ENCODE measurements at regions of chr6 and their contacts with region 1.

Region 1: GRCh38 chr6:7389451-7390225 is at the starts of genes CAGE1 and RIOK1:
- DNase-seq: peak; percentile 93
- H3K4me3 Mint-ChIP-seq: peak within 1 kb of the TSS; percentile 92
- H3K27ac Mint-ChIP-seq: peak within 1 kb of the TSS; percentile 100
- H3K4me1 Mint-ChIP-seq: peaks cover 53% of the 10 kb centered on the region
- H3K27me3 Mint-ChIP-seq: no peaks in the 10 kb centered on the region
- total RNA-seq, gene CAGE1: 0.13 and 0.20 TPM in 2 replicates
- total RNA-seq, gene RIOK1: 61.4 and 67.2 TPM in 2 replicates

Region 2: DNA sequence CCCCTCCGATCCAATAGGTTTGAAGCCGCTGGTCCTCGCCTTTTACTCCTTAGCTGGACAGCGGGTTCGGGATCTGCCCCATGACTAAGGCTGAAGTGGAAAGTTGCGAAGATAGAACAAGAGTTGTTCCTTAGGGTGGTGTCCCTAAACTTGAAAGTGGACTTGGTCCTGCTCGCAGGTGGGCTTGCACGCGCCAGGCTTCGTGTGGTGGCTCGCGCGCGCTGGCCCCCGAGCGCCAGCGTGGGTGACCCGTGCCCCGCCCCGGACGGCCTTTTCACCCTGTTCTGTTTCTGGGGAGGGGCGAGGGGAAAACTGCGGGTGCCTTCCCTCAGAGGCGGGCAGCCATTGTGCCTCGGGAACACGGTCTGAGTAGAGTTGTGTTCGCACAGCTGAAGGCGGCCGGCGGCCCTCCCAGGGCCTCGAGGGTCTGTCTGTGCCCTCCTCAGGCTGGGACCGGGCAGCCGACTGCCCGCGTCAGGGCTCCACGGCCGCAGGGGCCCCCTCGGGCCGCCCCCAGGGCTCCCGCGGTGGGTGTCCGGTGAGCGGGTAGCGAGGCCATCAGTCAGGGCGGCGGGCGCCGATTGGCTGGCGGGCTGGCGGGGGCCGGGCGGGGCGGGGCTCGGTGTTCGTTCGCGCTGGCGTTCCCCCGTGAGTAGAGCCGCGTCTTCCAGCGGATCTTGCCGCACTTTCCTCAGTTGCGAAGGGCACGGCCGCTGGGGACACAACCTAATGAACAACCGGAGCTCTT is 248.8 kb before region 1 on chr6:
- intact Hi-C with region 1: loop called (anchors 2 kb)
- DNase-seq: peak; percentile 78
- H3K4me3 Mint-ChIP-seq: peak overlapping the region; percentile 84
- H3K27ac Mint-ChIP-seq: peak overlapping the region; percentile 84
- H3K4me1 Mint-ChIP-seq: peaks cover 68% of the 10 kb centered on the region
- H3K27me3 Mint-ChIP-seq: no peaks in the 10 kb centered on the region

Region 3: DNA sequence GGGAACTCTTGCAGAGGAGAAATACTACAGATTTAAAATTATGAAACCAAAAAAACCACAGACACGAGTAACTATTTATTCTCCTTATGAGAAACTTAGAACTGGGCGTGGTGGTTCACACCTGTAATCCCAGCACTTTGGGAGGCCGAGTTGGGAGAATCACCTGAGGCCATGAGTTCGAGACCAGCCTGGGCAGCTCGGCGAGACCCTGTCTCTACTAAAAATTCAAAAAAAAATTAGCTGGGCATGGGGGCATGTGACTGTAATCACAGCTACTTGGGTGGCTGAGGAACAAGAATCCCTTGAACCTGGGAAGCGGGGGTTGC is 113.5 kb before region 1 on chr6:
- intact Hi-C with region 1: loop called (anchors 1 kb)
- DNase-seq: no peak
- H3K4me3 Mint-ChIP-seq: no peak overlapping the region
- H3K27ac Mint-ChIP-seq: no peak overlapping the region
- H3K4me1 Mint-ChIP-seq: peaks cover 2% of the 10 kb centered on the region
- H3K27me3 Mint-ChIP-seq: no peaks in the 10 kb centered on the region

Region 4: DNA sequence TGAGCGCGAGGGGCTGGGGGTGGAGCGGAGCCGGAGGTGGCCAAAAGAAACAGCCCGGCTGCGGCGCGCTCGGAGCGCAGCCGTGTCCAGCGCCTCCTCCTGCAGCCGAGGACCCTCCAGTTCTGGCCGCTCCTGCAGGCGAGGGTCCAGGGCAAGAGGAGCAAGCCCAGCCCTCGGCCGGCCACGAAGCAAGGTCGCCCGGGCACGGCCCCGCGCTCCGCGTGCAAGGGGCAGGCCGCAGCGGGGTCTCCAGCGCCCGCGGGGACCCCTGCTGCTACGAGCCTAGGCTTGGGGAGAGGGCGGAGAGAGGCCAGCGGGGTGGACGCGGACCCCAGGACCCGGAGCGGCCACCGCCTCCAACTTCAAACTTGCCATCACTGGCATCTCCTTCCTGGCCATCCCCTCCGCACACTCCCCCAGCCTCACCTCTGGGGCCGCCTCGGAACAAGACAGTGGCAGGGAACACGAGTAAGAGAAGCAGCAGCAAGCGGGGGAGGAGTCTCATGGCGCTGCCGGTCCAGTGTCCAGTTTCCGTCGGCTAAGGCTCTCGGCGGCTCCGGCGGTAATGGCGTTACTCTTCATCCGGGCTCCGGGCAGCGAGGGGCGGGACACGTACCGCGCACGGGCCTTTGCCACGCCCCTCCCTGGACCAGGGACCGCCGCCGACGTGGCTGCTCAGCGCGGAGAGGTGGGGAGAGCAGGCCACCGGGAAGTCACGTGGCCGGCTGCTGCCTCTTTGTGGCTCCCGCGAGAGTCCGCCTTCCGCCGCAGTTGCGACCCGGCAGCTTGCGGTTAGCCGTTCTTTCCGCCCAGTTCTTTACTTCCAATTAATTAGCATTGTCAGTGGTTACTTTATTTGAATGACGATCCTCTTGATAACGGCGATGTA is 76.8 kb before region 1 on chr6 and contains the start of gene SSR1:
- intact Hi-C with region 1: loop called (anchors 1 kb)
- DNase-seq: peak; percentile 95
- H3K4me3 Mint-ChIP-seq: peak within 1 kb of the TSS; percentile 98
- H3K27ac Mint-ChIP-seq: peak within 1 kb of the TSS; percentile 94
- H3K4me1 Mint-ChIP-seq: peaks cover 35% of the 10 kb centered on the region
- H3K27me3 Mint-ChIP-seq: no peaks in the 10 kb centered on the region
- total RNA-seq, gene SSR1: 160 and 168 TPM in 2 replicates

Region 5: DNA sequence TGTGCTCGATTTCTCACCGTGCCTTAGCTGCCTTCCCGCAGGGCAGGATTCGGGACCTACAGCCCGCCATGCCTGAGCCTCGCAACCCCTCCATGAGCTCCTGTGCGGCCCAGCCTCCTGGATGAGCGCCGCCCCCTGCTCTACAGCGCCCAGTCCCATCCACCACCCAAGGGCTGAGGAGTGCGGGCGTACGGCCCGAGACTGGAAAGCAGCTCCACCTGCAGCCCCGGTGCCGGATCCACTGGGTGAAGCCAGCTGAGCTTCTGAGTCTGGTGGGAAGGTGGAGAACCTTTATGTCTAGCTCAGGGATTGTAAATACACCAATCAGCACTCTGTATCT is 45.3 kb before region 1 on chr6:
- intact Hi-C with region 1: no loop called
- DNase-seq: no peak
- H3K4me3 Mint-ChIP-seq: no peak overlapping the region
- H3K27ac Mint-ChIP-seq: no peak overlapping the region
- H3K4me1 Mint-ChIP-seq: peaks cover 6% of the 10 kb centered on the region
- H3K27me3 Mint-ChIP-seq: peaks cover 21% of the 10 kb centered on the region

Region 6: GRCh38 chr6:7367408-7367807 is 22.2 kb before region 1 on chr6:
- intact Hi-C with region 1: no loop called
- DNase-seq: no peak
- H3K4me3 Mint-ChIP-seq: no peak overlapping the region
- H3K27ac Mint-ChIP-seq: no peak overlapping the region
- H3K4me1 Mint-ChIP-seq: no peaks in the 10 kb centered on the region
- H3K27me3 Mint-ChIP-seq: peaks cover 14% of the 10 kb centered on the region

Region 7: DNA sequence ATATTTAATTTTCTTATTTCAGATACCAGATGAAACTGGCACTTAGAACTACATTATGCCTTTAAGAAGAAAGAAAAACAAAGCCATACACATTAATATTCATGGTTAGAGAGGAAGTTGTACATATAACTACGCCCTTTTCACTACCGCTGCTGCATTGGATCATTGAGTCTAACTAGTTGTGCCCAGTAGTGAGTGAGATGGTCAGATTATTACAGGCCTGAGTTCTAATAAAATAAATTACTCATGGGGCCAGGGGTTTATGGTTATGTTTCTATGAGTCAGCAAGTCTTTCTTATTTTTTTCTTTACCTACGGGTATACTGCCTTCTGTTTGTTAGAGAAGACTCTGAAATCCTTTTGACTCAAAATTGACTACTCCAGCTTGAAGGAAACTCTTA is 11.4 kb after region 1 on chr6:
- intact Hi-C with region 1: loop called (anchors 1 kb)
- DNase-seq: no peak
- H3K4me3 Mint-ChIP-seq: no peak overlapping the region
- H3K27ac Mint-ChIP-seq: no peak overlapping the region
- H3K4me1 Mint-ChIP-seq: no peaks in the 10 kb centered on the region
- H3K27me3 Mint-ChIP-seq: no peaks in the 10 kb centered on the region

Region 8: DNA sequence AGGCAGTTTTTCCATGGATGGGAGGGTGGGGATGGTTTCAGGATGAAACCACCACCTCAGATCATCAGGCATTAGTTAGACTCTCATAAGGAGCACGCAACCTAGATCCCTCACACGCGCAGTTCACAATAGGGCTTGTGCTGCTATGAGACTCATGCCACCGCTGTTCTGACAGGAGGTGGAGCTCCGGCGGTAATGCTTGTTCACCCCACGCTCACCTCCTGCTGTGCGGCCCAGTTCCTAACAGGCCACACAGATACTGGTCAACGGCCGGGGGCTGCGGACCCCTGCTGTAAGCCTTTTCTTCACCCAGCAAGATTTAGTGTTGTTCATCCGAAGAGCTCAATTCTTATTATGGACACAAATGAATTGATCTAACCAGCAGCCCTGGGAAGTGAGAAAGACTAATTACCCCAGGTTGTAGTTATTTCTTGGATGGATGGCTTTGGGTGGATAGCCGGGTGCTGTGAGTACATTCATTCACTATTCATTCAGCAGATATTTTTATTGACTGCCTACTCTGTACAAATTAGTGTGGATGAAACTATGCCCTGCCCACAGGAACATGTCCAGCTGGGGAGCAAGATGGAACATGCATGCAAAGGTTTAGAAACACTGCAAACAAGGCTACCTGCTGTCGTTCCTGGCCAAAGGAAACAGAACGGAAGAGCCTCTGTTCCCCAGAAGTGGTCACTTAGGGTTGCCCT is 57.1 kb after region 1 on chr6:
- intact Hi-C with region 1: no loop called
- DNase-seq: no peak
- H3K4me3 Mint-ChIP-seq: no peak overlapping the region
- H3K27ac Mint-ChIP-seq: no peak overlapping the region
- H3K4me1 Mint-ChIP-seq: no peaks in the 10 kb centered on the region
- H3K27me3 Mint-ChIP-seq: peaks cover 5% of the 10 kb centered on the region

Region 9: DNA sequence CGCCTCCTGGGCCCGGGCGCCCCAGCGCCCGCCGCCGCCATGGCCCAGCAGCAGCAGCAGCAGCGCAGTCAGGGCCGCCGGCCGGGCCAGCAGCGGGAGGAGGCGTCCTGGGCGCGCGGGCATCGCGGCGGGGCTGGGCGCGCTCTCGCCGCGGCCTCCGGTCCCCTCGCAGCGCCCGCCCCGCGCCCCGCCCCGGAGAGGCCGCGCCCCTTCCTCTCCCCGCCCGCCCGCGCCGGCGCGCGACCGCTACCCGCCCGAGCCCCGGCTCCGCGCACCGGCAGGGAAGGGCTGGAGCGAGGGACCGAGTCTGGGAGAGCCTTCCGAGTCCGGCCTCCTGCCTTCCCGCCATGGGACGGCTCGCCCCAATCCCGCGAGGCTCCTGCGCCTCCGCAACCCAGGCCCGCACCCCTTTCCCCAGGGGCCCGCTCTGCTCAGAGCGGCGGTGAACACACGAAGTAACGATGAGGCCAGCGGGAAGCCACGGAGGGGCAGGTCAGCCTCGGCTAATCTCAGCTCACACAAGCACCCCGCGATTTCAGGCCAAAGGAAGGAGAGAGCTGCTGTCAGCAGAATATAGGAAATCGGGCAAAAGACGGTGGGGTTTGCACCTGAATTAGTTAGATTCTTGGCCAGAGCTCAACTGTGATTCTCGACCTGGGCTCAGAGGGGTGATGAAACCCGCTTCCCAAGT is 521.2 kb after region 1 on chr6 and contains the start of gene TXNDC5:
- intact Hi-C with region 1: loop called (anchors 5 kb)
- DNase-seq: peak; percentile 68
- H3K4me3 Mint-ChIP-seq: peak within 1 kb of the TSS; percentile 87
- H3K27ac Mint-ChIP-seq: peak within 1 kb of the TSS; percentile 64
- H3K4me1 Mint-ChIP-seq: peaks cover 20% of the 10 kb centered on the region
- H3K27me3 Mint-ChIP-seq: no peaks in the 10 kb centered on the region
- total RNA-seq, gene TXNDC5: 119 and 121 TPM in 2 replicates

Region 10: GRCh38 chr6:8102122-8102958 is 712.7 kb after region 1 on chr6 and contains the start of gene EEF1E1:
- intact Hi-C with region 1: loop called (anchors 5 kb)
- DNase-seq: peak; percentile 87
- H3K4me3 Mint-ChIP-seq: peak within 1 kb of the TSS; percentile 92
- H3K27ac Mint-ChIP-seq: peak within 1 kb of the TSS; percentile 97
- H3K4me1 Mint-ChIP-seq: peaks cover 34% of the 10 kb centered on the region
- H3K27me3 Mint-ChIP-seq: peaks cover 4% of the 10 kb centered on the region
- total RNA-seq, gene EEF1E1: 92.8 and 99.8 TPM in 2 replicates